Activated CD4-positive, alpha-beta memory T cell treated with anti-CD3 and anti-CD28 coated beads, Interleukin-2, amount 10 ng/mL, durations not matched to agents 7 days and 5 days (primary cell): ENCODE measurements at regions of chr1 and their contacts with region 1.

Region 1: GRCh38 chr1:155001675-155002463 is 733 bp upstream of the ZBTB7B start:
- DNase-seq: peak; percentile 99
- H3K4me3 Mint-ChIP-seq: peak overlapping the region; percentile 90
- H3K27ac Mint-ChIP-seq: peak overlapping the region; percentile 91
- H3K4me1 Mint-ChIP-seq: peaks cover 56% of the 10 kb centered on the region
- H3K27me3 Mint-ChIP-seq: no peaks in the 10 kb centered on the region

Region 2: DNA sequence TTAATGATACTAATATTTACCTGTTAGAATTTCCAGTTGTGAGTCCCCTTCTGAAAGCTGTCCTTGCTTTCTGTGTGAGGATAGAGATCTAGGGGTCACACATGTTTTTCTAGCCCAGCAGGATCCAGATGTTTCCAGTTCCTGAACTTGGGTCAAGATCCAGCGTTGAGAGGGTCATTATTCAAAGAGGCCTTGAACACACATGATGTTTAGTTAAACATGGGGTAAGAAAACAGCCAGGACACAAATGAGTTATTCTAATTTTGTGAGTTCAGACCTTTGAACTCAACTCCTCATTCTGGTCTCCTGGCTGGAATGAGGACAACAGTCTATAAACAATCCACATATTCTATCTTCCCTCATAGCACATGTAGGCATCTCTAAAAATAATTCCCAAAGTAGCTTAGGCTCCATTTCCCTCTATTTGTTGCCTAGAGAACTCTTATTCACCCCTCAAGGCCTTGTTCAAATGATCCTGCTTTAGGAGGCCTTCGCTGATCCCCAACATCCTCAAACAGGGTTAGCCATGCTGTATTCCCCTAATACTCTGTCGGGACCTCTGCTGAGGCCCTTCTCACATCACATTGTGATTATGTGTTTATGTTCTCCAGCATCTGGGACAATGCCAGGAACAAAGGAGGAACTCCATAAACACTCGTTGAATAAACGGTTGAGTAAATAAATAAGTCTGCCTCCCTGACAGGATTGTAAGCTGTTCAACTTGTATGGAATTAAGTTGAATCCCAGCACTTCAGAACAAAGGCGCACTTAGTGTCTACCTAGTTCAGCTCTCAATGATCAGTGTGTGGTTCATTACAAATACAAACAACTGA is 116.8 kb before region 1 on chr1:
- CTCF ChIA-PET with region 1: no interaction called
- POLR2A ChIA-PET with region 1: no interaction called
- DNase-seq: no peak
- H3K4me3 Mint-ChIP-seq: no peak overlapping the region
- H3K27ac Mint-ChIP-seq: no peak overlapping the region
- H3K4me1 Mint-ChIP-seq: peaks cover 27% of the 10 kb centered on the region
- H3K27me3 Mint-ChIP-seq: peaks cover 9% of the 10 kb centered on the region

Region 3: DNA sequence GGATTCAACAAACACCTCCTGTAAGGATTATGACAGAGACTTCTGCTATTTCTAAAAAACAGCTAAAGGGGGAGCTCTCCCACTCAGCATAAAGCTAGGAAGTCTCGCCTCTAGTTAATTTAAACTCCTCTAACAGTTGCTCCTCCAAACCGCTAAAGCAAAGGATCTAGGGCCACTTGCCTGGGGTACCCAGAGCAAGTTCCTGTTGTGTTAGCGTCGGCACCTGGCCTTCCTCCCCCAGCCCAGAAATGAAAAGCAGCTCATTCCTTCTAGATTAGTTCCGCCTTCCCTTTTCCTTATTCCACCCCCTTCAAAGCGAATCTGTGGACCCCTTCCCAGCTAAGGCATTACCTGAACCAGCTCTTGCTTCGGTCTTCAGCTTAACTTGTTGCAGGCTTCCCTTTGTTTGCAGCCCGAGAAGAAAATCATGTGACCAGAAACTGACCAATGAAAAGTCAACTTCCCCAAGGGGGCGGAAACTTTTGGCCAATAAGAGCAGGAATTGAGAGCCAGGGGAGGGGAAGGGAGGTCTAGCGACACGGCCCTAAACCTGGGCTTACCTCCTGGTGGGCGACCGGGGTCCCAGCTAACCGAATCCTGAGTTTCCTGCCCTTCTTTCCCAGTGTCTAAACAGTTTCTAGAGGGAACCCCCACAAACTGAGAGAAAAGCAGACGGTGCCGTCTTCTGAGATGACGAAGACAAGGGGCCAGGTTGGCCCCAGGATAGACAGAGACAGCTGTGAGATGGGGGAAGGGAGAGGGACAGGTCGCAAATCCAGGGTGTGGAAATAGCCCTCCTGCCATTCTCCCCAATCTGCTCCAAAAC is 45.9 kb before region 1 on chr1 and contains the start of gene PBXIP1:
- CTCF ChIA-PET with region 1: interaction called, 16 read pairs
- POLR2A ChIA-PET with region 1: interaction called, 12 read pairs
- DNase-seq: peak; percentile 88
- H3K4me3 Mint-ChIP-seq: peak within 1 kb of the TSS; percentile 96
- H3K27ac Mint-ChIP-seq: peak within 1 kb of the TSS; percentile 97
- H3K4me1 Mint-ChIP-seq: peaks cover 85% of the 10 kb centered on the region
- H3K27me3 Mint-ChIP-seq: no peaks in the 10 kb centered on the region
- total RNA-seq, gene PBXIP1: 169 TPM

Region 4: GRCh38 chr1:154961497-154962262 is 40.2 kb before region 1 on chr1 and contains the start of gene PYGO2:
- CTCF ChIA-PET with region 1: interaction called, 16 read pairs
- POLR2A ChIA-PET with region 1: interaction called, 12 read pairs
- DNase-seq: peak; percentile 83
- H3K4me3 Mint-ChIP-seq: peak within 1 kb of the TSS; percentile 97
- H3K27ac Mint-ChIP-seq: peak within 1 kb of the TSS; percentile 89
- H3K4me1 Mint-ChIP-seq: peaks cover 56% of the 10 kb centered on the region
- H3K27me3 Mint-ChIP-seq: no peaks in the 10 kb centered on the region
- total RNA-seq, gene PYGO2: 48.7 to 49.7 TPM

Region 5: DNA sequence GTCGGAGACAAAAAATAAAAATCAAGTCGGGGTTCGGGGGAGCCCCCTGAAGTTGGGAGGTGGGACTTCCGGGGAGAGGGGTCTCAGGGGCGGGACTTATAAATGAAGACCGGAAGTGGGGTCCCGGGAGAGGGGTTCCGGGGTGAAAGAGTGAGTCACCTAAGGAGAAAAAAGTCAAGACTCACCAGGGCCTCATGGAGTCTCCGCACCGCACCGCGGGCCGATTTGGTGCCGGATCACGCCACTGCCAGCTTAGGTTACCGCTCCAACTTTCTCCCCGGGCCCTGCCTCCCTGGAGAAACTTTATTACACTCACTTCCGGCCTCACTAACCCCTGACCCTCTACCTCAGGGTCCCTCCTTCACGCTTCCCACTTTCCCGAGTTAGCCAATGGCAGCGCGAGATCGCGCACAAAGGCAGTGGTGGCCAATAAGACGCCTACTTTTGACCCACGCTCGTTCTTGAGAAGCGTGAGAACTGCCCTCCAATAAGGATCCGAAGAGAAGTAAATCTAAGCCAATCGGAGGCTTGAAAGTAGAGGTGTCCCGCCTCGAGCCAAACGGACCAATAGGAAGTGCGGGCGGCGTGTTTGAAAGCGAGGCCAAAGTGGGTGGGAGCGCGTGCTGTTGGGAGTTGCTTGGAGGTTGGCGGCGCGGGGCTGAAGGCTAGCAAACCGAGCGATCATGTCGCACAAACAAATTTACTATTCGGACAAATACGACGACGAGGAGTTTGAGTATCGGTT is 27.6 kb before region 1 on chr1 and contains the start of gene CKS1B:
- CTCF ChIA-PET with region 1: interaction called, 18 read pairs
- POLR2A ChIA-PET with region 1: interaction called, 26 read pairs
- DNase-seq: peak; percentile 97
- H3K4me3 Mint-ChIP-seq: no peak within 1 kb of the TSS
- H3K27ac Mint-ChIP-seq: no peak within 1 kb of the TSS
- H3K4me1 Mint-ChIP-seq: peaks cover 45% of the 10 kb centered on the region
- H3K27me3 Mint-ChIP-seq: no peaks in the 10 kb centered on the region
- total RNA-seq, gene CKS1B: 151 to 162 TPM

Region 6: GRCh38 chr1:154982897-154983648 is 18.8 kb before region 1 on chr1 and contains the start of gene FLAD1:
- CTCF ChIA-PET with region 1: interaction called, 49 read pairs
- POLR2A ChIA-PET with region 1: interaction called, 45 read pairs
- DNase-seq: peak; percentile 97
- H3K4me3 Mint-ChIP-seq: no peak within 1 kb of the TSS
- H3K27ac Mint-ChIP-seq: no peak within 1 kb of the TSS
- H3K4me1 Mint-ChIP-seq: peaks cover 28% of the 10 kb centered on the region
- H3K27me3 Mint-ChIP-seq: no peaks in the 10 kb centered on the region
- total RNA-seq, gene FLAD1: 34.7 to 35.1 TPM

Region 7: DNA sequence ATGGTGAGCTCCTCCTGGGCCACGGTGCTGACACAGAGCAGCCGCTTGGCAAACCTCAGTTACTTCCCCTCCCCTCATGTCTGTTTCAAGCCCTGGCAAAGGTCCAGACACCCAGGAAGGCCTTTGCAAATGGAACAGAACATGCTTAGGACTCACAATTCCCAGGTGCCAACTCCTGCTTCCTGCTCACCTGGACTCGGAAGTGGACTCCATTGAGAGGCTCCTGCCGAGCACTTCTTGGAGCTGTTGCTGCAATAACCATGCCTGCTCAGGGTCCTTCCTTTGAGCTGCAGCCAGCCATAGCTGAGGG is 21.0 kb after region 1 on chr1:
- CTCF ChIA-PET with region 1: interaction called, 139 read pairs
- POLR2A ChIA-PET with region 1: interaction called, 203 read pairs
- DNase-seq: no peak
- H3K4me3 Mint-ChIP-seq: no peak overlapping the region
- H3K27ac Mint-ChIP-seq: no peak overlapping the region
- H3K4me1 Mint-ChIP-seq: peaks cover 14% of the 10 kb centered on the region
- H3K27me3 Mint-ChIP-seq: no peaks in the 10 kb centered on the region